Activated CD4-positive, alpha-beta memory T cell treated with anti-CD3 and anti-CD28 coated beads, Interleukin-2, amount 10 ng/mL, durations not matched to agents 7 days and 5 days (primary cell): ENCODE measurements at regions of chr11 and their contacts with region 1.

Region 1: GRCh38 chr11:129331871-129332274 is 43.8 kb upstream of the BARX2 start:
- DNase-seq: peak; percentile 63
- H3K4me3 Mint-ChIP-seq: no peak overlapping the region
- H3K27ac Mint-ChIP-seq: no peak overlapping the region
- H3K4me1 Mint-ChIP-seq: peaks cover 3% of the 10 kb centered on the region
- H3K27me3 Mint-ChIP-seq: no peaks in the 10 kb centered on the region

Region 2: DNA sequence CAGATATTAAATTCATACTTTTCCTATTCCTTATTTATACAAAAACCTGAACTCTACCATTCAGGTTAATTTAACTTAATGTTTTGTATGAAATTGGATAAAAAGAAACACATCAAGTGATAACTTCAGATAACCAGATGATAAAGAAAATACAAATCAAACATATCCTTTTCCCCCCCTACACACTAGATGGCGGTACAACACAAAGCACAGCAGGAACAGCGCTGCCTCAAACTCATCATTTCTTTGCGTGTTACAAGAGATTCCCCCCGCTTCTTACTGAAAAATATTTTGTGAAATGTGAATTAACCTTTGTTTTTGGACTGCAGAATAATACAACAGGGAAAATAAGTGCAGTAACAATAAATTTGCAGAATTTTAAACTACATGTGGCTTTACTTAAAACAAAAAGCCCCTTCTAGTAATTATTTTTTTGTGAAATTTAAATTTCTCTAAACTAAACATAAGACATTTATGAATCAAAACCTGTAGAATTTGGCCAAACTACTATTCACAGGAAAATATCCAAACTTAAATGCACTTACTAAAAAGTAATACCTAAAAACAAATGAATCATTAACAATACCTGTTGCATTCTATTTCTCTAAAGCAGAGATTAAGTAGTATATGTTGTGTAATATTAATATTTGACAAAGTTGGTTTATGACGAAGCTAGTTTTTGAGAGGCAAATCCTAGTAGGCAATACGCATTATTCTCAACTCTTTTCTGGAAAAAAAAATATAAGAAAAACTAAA is 214.1 kb before region 1 on chr11:
- CTCF ChIA-PET with region 1: interaction called, 31 read pairs
- POLR2A ChIA-PET with region 1: no interaction called
- DNase-seq: peak; percentile 47
- H3K4me3 Mint-ChIP-seq: no peak overlapping the region
- H3K27ac Mint-ChIP-seq: no peak overlapping the region
- H3K4me1 Mint-ChIP-seq: no peaks in the 10 kb centered on the region
- H3K27me3 Mint-ChIP-seq: peaks cover 9% of the 10 kb centered on the region